MCF 10A (cell line): ENCODE measurements at regions of chr17 and their contacts with region 1.

Region 1: GRCh38 chr17:42677008-42677857 is 439 bp upstream of the PLEKHH3 start:
- DNase-seq: peak; percentile 100
- H3K4me3 Mint-ChIP-seq: peak overlapping the region; percentile 86
- H3K27ac Mint-ChIP-seq: peak overlapping the region; percentile 42
- H3K4me1 Mint-ChIP-seq: peaks cover 22% of the 10 kb centered on the region
- H3K27me3 Mint-ChIP-seq: no peaks in the 10 kb centered on the region
- CTCF ChIP-seq: no peak

Region 2: DNA sequence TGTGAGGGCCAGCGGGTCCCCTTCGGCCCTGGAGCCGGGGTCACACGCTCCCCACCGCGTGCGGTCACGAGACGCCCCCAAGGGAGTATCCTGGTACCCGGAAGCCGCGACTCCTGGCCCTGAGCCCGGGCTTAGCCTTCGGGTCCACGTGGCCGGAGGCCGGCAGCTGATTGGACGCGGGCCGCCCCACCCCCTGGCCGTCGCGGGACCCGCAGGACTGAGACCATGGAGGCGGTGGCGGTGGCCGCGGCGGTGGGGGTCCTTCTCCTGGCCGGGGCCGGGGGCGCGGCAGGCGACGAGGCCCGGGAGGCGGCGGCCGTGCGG is 141.2 kb before region 1 on chr17 and contains the start of gene NAGLU:
- CTCF ChIA-PET with region 1: interaction called, 3 read pairs
- POLR2A ChIA-PET with region 1: interaction called, 12 read pairs
- intact Hi-C with region 1: no loop called
- DNase-seq: peak; percentile 84
- H3K4me3 Mint-ChIP-seq: peak within 1 kb of the TSS; percentile 81
- H3K27ac Mint-ChIP-seq: peak within 1 kb of the TSS; percentile 87
- H3K4me1 Mint-ChIP-seq: peaks cover 18% of the 10 kb centered on the region
- H3K27me3 Mint-ChIP-seq: no peaks in the 10 kb centered on the region
- CTCF ChIP-seq: no peak
- total RNA-seq, gene NAGLU: 21.0 and 29.5 TPM in 2 replicates

Region 3: DNA sequence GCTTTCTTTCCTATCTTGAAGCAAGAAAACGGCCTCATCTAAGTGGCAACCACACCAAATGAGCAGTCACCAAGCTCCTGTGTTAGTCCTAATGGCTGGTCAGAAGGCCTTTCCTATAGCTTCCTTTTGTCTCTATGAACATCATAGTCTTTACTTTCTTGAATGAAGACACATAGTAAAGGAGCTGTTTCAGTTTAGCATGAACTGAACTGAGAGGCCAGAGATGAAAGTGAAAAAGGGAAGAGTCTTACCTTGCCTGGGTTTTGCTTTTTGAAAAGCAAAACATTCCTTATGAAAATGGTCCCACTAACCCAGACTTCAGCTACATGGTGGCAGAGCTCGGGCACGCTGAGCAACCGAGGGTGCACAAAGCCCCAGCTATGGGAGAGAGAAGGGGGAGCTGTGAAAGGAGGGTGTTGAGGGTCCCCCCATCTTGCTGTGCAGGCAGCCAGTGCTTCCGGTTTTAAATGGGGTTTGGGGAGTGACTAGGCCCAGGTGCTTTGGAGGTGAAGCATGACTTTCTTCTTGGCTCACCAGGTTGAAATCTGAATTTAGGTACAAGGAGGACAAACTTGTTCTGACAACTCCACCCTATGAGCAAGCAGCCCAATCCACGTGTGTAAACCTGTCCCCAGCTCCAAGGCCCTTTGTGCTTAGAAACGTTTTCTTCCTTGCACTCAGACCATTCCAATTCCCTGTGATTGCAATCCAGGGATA is 90.6 kb before region 1 on chr17:
- CTCF ChIA-PET with region 1: interaction called, 7 read pairs
- POLR2A ChIA-PET with region 1: interaction called, 14 read pairs
- intact Hi-C with region 1: no loop called
- DNase-seq: peak; percentile 52
- H3K4me3 Mint-ChIP-seq: peak overlapping the region; percentile 21
- H3K27ac Mint-ChIP-seq: peak overlapping the region; percentile 25
- H3K4me1 Mint-ChIP-seq: peaks cover 21% of the 10 kb centered on the region
- H3K27me3 Mint-ChIP-seq: no peaks in the 10 kb centered on the region
- CTCF ChIP-seq: no peak

Region 4: DNA sequence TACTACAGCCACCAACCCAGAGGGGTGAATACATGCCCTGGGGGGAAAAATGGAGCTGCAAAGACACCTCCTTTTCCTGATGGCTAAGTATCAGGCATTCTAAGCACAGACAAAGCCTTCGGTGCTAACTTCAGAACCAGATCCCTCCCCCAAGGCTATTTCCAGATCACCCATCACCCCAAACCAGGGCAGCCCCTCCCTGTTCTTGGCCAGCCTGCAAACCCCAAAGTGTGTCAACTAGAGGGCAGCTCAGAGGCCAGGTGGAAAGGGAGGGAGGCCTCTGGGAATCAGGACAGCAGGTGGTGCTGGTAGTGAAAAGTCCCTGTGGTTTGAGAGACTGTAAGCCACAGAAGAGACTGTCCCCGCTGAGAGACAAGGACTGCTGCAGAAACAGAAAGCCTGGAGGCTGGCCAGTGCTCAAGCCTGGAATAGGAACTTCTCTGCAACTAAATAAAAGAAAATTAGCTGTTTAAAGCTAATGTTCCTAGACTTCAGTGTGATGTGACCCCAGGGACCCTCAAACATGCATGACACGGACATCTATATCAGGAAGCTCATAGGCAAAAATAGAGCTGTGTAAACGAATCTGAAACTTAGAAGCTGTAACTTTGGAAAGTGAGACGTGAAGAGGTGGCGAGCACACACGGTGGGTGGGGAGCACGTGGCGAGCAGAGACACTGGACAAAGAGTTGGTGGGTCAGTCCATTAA is 58.6 kb before region 1 on chr17:
- CTCF ChIA-PET with region 1: interaction called, 61 read pairs
- POLR2A ChIA-PET with region 1: interaction called, 43 read pairs
- intact Hi-C with region 1: loop called (anchors 5 kb)
- DNase-seq: peak; percentile 80
- H3K4me3 Mint-ChIP-seq: no peak overlapping the region
- H3K27ac Mint-ChIP-seq: peak overlapping the region; percentile 42
- H3K4me1 Mint-ChIP-seq: peaks cover 15% of the 10 kb centered on the region
- H3K27me3 Mint-ChIP-seq: no peaks in the 10 kb centered on the region
- CTCF ChIP-seq: peak; percentile 47

Region 5: DNA sequence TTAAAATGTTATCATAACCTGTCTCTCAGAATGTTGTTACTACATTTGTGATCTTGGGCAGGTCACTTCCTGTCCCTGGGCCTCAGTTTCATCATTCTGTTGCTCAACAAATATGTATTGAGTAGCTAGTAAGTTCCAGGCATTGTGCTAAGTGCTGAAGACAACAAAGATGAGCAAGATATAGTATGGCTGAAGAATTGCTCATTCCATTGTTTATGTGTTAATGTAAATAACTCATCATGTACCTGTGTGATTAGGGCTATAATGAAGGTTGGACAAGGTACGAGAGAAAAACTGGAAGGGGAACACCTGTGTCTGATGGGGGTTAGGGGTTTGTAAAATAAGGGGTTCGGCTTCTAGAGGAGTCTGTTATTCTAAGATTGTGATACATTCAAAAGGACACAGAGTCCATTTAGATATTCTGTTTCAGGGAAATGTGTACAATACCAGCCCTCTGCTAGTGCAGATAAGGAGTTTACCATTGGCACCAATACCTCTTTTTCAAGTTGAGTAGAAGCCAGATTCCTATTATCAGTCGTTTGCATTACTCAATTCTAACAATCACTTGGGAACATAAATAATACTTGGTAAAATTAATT is 47.7 kb before region 1 on chr17:
- CTCF ChIA-PET with region 1: interaction called, 4 read pairs
- POLR2A ChIA-PET with region 1: interaction called, 13 read pairs
- intact Hi-C with region 1: loop called (anchors 5 kb)
- DNase-seq: peak; percentile 87
- H3K4me3 Mint-ChIP-seq: no peak overlapping the region
- H3K27ac Mint-ChIP-seq: peak overlapping the region; percentile 74
- H3K4me1 Mint-ChIP-seq: peaks cover 10% of the 10 kb centered on the region
- H3K27me3 Mint-ChIP-seq: no peaks in the 10 kb centered on the region
- CTCF ChIP-seq: no peak

Region 6: DNA sequence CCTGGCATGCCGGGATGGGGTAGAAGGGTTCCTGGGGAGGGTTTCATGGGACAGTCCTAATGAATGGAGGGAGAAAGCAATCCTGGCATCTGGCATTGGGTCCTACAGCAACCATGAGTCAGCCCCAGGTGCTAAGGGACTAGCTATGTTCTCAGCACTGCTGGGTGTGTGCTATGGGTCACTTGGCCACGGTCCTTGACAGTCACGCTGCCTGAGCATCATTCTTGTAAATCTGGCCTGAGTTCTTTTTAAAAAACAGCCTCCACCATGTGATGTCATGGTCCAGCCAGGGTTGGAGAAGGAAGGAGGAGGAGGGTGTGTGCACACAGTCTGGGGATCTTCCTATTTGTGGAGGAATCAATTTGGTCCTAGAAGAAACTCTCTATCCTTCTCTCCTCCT is 77.5 kb after region 1 on chr17:
- CTCF ChIA-PET with region 1: no interaction called
- POLR2A ChIA-PET with region 1: no interaction called
- intact Hi-C with region 1: no loop called
- DNase-seq: peak; percentile 42
- H3K4me3 Mint-ChIP-seq: no peak overlapping the region
- H3K27ac Mint-ChIP-seq: no peak overlapping the region
- H3K4me1 Mint-ChIP-seq: peaks cover 7% of the 10 kb centered on the region
- H3K27me3 Mint-ChIP-seq: peaks cover 11% of the 10 kb centered on the region
- CTCF ChIP-seq: no peak

Region 7: DNA sequence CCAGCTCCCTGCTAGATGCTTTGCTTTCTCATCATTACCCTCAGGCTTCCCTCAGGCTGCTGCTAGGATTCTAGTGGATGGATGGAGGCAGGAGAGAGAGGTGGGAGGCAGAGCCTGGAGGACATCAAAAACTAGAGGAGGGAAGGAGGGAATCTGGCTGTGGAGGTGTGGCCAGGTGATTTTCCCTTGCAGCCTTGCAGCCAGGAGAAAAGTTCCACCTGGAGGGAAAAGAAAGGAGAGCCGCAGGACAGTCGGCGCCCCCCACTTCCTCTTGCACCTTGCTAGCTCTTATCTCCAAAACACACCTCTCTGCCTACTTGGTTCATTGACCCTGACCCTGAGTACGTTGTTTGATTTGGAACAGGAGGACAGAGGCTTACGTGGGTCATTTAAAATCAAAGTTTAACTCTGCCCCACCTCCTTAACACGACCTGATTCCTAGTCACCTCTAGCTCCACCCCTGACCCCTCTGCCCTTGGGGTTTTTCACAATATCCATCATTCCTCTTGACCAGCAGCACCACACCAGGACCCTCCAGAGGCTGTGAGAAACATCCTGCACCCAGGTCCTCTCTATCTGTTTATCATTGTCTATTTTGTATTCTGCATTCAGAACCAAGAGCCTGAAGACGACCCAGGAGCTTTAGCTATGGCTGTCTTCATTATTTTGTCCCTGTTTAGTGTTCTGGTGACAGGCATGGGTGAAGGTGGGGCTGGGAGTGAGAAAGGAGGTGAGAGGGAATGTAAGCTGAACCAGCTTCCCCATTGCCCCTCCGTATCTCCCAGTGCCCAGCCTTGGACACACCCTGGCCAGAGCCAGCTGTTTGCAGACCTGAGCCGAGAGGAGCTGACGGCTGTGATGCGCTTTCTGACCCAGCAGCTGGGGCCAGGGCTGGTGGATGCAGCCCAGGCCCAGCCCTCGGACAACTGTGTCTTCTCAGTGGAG is 189.7 kb after region 1 on chr17:
- CTCF ChIA-PET with region 1: no interaction called
- POLR2A ChIA-PET with region 1: no interaction called
- intact Hi-C with region 1: no loop called
- DNase-seq: no peak
- H3K4me3 Mint-ChIP-seq: no peak overlapping the region
- H3K27ac Mint-ChIP-seq: no peak overlapping the region
- H3K4me1 Mint-ChIP-seq: no peaks in the 10 kb centered on the region
- H3K27me3 Mint-ChIP-seq: peaks cover 43% of the 10 kb centered on the region
- CTCF ChIP-seq: no peak

Region 8: GRCh38 chr17:43070872-43071271 is 393.6 kb after region 1 on chr17:
- CTCF ChIA-PET with region 1: no interaction called
- POLR2A ChIA-PET with region 1: no interaction called
- intact Hi-C with region 1: no loop called
- DNase-seq: no peak
- H3K4me3 Mint-ChIP-seq: no peak overlapping the region
- H3K27ac Mint-ChIP-seq: no peak overlapping the region
- H3K4me1 Mint-ChIP-seq: no peaks in the 10 kb centered on the region
- H3K27me3 Mint-ChIP-seq: no peaks in the 10 kb centered on the region
- CTCF ChIP-seq: no peak